Esophagus muscularis mucosa (tissue), 4 donors: ENCODE measurements at regions of chr7 and their contacts with region 1.

Region 1: GRCh38 chr7:109354000-109354399 is 784.3 kb downstream of the DNAJB9 start:
- DNase-seq: no peak
- H3K4me3 ChIP-seq: no peak overlapping the region
- H3K27ac ChIP-seq: no peak overlapping the region
- H3K4me1 ChIP-seq: no peaks in the 10 kb centered on the region
- H3K27me3 ChIP-seq: no peaks in the 10 kb centered on the region
- CTCF ChIP-seq: no peak
- EP300 ChIP-seq: no peak
- POLR2A ChIP-seq: no peak

Region 2: GRCh38 chr7:109391240-109391639 is 37.2 kb after region 1 on chr7:
- intact Hi-C with region 1: loop called (anchors 2 kb)
- DNase-seq: no peak
- H3K4me3 ChIP-seq: no peak overlapping the region
- H3K27ac ChIP-seq: no peak overlapping the region
- H3K4me1 ChIP-seq: no peaks in the 10 kb centered on the region
- H3K27me3 ChIP-seq: no peaks in the 10 kb centered on the region
- CTCF ChIP-seq: no peak
- EP300 ChIP-seq: no peak
- POLR2A ChIP-seq: no peak